Activated naive CD8-positive, alpha-beta T cell treated with anti-CD3 and anti-CD28 coated beads, Interleukin-2, amount 10 ng/mL, durations not matched to agents 7 days and 5 days (primary cell): ENCODE measurements at regions of chr20 and their contacts with region 1.

Region 1: GRCh38 chr20:35954200-35954906 is at the start of gene SCAND1:
- DNase-seq: peak; percentile 98
- ATAC-seq: peak; percentile 91
- H3K4me3 Mint-ChIP-seq: peak within 1 kb of the TSS; percentile 99
- H3K27ac Mint-ChIP-seq: peak within 1 kb of the TSS; percentile 100
- H3K4me1 Mint-ChIP-seq: peaks cover 8% of the 10 kb centered on the region
- H3K27me3 Mint-ChIP-seq: no peaks in the 10 kb centered on the region
- total RNA-seq, gene SCAND1: 57.8 to 60.9 TPM

Region 2: DNA sequence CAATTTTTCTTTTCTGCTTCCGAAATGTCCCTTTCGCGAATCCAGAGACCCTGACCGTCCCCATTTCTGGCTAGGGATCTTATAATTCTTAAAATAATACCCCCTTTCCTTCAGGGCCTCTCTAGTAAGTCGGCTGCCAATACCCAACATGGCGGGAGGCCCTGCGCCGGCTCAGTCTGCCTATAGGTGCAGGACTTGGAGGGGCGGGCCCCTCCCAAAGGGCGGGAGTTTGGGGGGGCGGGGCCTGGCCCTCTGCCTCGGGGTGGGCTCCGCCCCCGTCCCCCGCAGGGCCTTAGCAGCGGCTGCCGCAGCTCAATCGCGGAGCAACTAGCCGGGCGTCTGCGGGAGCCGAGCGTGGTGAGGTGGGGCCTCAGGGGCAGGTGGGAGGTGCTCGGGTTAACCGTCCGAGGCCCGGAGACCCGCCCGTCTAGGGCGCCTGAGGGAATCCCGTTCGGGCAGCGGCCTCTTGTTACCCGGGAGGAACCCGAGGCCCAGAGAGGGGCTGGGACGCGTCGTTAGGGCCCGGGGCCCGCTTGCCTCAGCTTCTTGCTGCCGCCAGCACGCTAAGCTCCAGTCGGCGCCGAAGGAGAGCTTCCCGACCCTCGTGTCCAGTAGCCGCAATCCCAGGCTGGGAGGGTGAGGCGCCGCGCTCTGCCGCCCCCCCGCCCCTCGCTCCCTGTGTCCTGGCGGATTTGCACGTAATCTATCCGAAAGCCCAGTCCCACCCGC is 499.3 kb before region 1 on chr20 and contains the start of gene CEP250:
- POLR2A ChIA-PET with region 1: interaction called, 20 read pairs
- DNase-seq: peak; percentile 95
- ATAC-seq: peak; percentile 93
- H3K4me3 Mint-ChIP-seq: peak within 1 kb of the TSS; percentile 90
- H3K27ac Mint-ChIP-seq: peak within 1 kb of the TSS; percentile 96
- H3K4me1 Mint-ChIP-seq: peaks cover 24% of the 10 kb centered on the region
- H3K27me3 Mint-ChIP-seq: no peaks in the 10 kb centered on the region
- total RNA-seq, gene CEP250: 82.9 to 84.5 TPM

Region 3: DNA sequence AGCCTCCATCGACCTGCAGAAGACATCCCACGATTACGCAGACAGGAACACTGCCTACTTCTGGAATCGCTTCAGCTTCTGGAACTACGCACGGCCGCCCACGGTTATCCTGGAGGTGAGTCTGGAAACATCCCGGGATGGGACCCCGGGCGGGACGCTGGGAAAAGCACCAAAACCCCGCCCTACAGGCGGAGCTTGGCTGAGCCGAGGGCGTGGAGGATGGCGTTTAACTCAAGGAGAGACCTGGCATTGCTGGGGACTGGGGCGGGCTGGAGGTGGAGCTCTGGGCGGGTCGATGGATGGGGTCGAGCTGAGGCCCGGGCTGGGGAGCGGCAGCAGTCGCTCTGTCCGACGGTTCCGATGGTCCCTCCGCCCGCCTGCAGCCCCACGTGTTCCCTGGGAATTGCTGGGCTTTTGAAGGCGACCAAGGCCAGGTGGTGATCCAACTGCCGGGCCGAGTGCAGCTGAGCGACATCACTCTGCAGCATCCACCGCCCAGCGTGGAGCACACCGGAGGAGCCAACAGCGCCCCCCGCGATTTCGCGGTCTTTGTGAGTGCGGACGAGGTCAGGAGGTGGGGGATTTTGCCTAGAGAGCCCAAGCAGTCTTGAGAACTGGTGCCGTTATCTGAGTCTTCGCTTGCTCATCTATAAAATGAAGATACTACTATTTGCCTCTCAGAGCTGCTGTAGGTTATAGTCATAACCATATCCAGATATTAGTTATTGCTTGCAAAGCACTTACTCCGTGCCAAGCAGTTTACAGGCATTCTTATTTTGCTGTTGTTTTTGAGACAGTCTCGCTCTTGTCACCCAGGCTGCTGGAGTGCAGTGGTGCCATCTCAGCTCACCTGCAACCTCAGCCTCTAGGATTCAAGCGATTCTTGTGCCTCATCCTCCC is 334.9 kb before region 1 on chr20:
- POLR2A ChIA-PET with region 1: interaction called, 21 read pairs
- DNase-seq: peak; percentile 83
- ATAC-seq: peak; percentile 41
- H3K4me3 Mint-ChIP-seq: peak overlapping the region; percentile 86
- H3K27ac Mint-ChIP-seq: peak overlapping the region; percentile 80
- H3K4me1 Mint-ChIP-seq: peaks cover 18% of the 10 kb centered on the region
- H3K27me3 Mint-ChIP-seq: no peaks in the 10 kb centered on the region

Region 4: DNA sequence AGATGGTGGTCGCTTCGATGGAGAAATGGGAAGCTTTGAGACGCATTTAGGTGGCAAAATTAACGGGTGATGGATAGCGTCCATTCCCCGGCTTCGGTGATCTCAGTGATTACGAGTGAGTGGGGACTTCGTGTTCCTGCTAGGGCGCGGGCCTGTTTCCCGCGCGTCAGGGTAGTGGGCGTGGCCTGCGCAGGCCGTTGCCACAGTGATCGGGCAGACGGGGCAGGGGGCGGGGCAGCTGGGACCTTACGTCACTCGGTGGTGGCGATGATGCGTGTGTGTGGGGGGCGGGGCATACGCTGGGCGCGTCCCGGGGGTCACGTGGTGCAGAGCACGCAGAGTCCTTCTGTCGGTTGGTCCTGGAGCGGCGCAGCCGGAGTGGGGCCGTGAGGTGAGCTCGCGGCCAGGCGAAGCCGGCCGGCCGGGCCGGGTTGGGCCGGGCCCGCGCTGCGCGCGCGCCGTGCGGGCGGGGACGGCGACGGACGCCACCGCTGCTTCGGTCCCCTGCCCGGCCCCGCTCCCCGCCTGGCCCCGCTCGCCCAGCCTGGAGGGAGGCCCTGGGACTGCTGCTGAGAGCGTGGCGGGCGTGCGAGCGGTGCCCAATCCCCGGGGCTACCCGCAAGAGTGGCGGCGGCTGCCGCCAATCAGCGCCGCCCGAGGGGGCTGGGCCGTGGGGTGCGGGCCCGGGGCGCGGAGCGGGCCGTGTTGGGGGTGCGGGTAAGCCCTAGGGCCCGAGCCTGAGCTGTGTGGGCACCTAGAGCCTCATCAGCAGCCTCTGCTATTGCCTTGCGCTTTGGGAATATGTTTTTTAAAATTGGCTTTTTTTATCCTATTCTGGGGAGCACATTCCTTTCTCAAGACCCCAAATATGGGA is 182.4 kb before region 1 on chr20 and contains the start of gene PHF20:
- POLR2A ChIA-PET with region 1: interaction called, 14 read pairs
- DNase-seq: peak; percentile 99
- ATAC-seq: peak; percentile 92
- H3K4me3 Mint-ChIP-seq: peak within 1 kb of the TSS; percentile 90
- H3K27ac Mint-ChIP-seq: peak within 1 kb of the TSS; percentile 95
- H3K4me1 Mint-ChIP-seq: peaks cover 54% of the 10 kb centered on the region
- H3K27me3 Mint-ChIP-seq: no peaks in the 10 kb centered on the region
- total RNA-seq, gene PHF20: 61.9 to 69.4 TPM

Region 5: DNA sequence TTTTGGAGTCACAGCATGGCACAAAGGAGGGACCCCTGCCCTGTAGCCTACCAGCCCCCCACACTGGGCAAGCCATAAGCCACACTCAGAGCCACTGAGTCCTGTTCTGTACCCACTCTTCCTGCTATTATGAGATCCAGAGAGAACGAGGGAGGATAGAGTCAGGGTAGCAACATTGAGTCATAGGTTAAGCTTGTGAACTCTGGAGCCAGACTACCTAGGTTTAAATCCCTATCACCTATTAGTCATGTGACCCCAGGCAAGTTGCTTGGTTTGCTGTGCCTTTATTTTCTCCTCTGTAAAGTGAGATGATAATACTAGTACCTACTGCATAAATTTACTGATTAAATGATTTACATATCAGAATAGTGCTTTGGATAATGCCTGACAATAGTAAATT is 14.6 kb after region 1 on chr20:
- POLR2A ChIA-PET with region 1: interaction called, 11 read pairs
- DNase-seq: no peak
- ATAC-seq: no peak
- H3K4me3 Mint-ChIP-seq: no peak overlapping the region
- H3K27ac Mint-ChIP-seq: no peak overlapping the region
- H3K4me1 Mint-ChIP-seq: peaks cover 3% of the 10 kb centered on the region
- H3K27me3 Mint-ChIP-seq: peaks cover 12% of the 10 kb centered on the region

Region 6: DNA sequence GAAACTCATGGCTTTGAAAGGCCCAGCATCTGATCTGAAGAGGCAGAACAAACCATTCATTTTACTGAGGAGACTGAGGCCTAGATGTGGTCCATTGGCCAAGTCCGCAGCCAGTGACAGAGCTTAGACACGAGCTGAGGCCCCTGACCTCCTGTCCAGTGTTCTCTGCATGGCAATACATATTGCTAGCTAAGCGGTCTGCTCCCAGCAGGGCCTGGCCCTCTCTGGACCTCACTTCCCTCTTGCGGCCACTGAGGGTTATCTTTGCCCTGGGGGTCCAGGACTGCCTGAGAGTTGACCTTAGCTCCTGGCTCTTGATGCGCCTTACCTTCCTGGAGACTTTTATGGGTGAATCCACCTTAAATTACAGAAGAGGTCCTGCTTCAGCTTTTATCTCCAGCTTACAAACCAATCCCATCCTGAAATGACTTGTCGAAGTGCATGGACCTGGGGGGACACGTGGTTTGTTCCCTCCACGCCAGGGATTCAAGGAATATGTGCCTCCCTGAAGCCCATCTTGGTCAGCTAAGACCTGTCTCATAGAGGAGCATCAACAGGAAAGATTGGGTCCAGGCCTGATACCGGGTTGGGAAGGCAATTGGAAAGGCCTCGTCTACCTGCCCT is 89.7 kb after region 1 on chr20:
- POLR2A ChIA-PET with region 1: no interaction called
- DNase-seq: no peak
- ATAC-seq: no peak
- H3K4me3 Mint-ChIP-seq: no peak overlapping the region
- H3K27ac Mint-ChIP-seq: no peak overlapping the region
- H3K4me1 Mint-ChIP-seq: peaks cover 16% of the 10 kb centered on the region
- H3K27me3 Mint-ChIP-seq: no peaks in the 10 kb centered on the region